Activated naive CD8-positive, alpha-beta T cell treated with anti-CD3 and anti-CD28 coated beads, Interleukin-2, amount 10 ng/mL, durations not matched to agents 7 days and 5 days (primary cell): ENCODE measurements at regions of chr19 and their contacts with region 1.

Region 1: GRCh38 chr19:4342615-4343369 is 570 bp upstream of the MPND start:
- DNase-seq: peak; percentile 89
- ATAC-seq: peak; percentile 89
- H3K4me3 Mint-ChIP-seq: peak overlapping the region; percentile 91
- H3K27ac Mint-ChIP-seq: peak overlapping the region; percentile 95
- H3K4me1 Mint-ChIP-seq: peaks cover 22% of the 10 kb centered on the region
- H3K27me3 Mint-ChIP-seq: no peaks in the 10 kb centered on the region

Region 2: GRCh38 chr19:4246767-4247593 is 95.8 kb before region 1 on chr19 and contains the start of gene YJU2:
- POLR2A ChIA-PET with region 1: interaction called, 20 read pairs
- DNase-seq: peak; percentile 94
- ATAC-seq: peak; percentile 94
- H3K4me3 Mint-ChIP-seq: peak within 1 kb of the TSS; percentile 93
- H3K27ac Mint-ChIP-seq: peak within 1 kb of the TSS; percentile 98
- H3K4me1 Mint-ChIP-seq: peaks cover 6% of the 10 kb centered on the region
- H3K27me3 Mint-ChIP-seq: no peaks in the 10 kb centered on the region
- total RNA-seq, gene YJU2: 27.9 to 29.0 TPM

Region 3: GRCh38 chr19:4267101-4267900 is 75.5 kb before region 1 on chr19:
- POLR2A ChIA-PET with region 1: interaction called, 22 read pairs
- DNase-seq: peak; percentile 66
- ATAC-seq: peak; percentile 43
- H3K4me3 Mint-ChIP-seq: no peak overlapping the region
- H3K27ac Mint-ChIP-seq: peak overlapping the region; percentile 53
- H3K4me1 Mint-ChIP-seq: peaks cover 29% of the 10 kb centered on the region
- H3K27me3 Mint-ChIP-seq: no peaks in the 10 kb centered on the region

Region 4: GRCh38 chr19:4328243-4328990 is 14.4 kb before region 1 on chr19:
- POLR2A ChIA-PET with region 1: interaction called, 30 read pairs
- DNase-seq: peak; percentile 96
- ATAC-seq: peak; percentile 80
- H3K4me3 Mint-ChIP-seq: peak overlapping the region; percentile 86
- H3K27ac Mint-ChIP-seq: peak overlapping the region; percentile 89
- H3K4me1 Mint-ChIP-seq: peaks cover 20% of the 10 kb centered on the region
- H3K27me3 Mint-ChIP-seq: no peaks in the 10 kb centered on the region

Region 5: DNA sequence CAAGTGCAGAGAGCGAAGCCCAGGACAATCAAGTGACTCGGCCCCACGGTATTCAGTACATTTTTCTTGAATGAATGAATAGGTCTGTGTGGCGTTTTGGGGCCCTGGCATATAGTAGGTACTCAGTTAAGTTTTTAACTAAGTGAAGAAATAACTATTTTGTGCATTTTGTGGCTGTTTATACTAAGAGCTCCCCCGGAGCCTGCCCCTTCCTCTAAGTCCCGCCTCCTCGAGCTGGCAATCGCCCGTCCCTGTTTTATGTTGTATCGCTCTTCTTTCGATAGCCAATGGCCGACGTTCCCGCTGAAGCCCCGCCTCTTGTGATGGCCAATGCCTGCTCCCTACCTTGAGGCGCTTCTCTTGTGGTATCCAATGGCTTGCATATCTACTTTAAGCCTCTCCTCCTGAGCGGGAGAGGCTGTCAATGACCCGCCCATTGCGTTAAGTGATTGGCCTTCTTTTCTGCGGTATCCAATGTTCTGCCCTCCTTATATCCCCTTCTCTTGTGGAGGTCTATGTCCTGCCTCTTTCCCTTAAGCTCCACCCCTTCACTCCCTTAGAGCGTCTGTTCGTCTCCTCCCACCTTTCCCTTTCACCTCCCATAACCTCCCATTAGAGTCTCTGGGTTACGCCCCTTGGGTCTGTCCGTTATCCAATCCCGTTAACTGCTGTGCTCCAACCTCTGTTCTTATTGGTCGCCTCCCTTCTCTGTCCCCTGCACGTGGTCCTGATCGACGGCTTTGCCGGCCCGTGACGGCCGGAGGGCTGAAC is 128.8 kb after region 1 on chr19:
- POLR2A ChIA-PET with region 1: interaction called, 14 read pairs
- DNase-seq: peak; percentile 90
- ATAC-seq: peak; percentile 88
- H3K4me3 Mint-ChIP-seq: no peak overlapping the region
- H3K27ac Mint-ChIP-seq: no peak overlapping the region
- H3K4me1 Mint-ChIP-seq: peaks cover 19% of the 10 kb centered on the region
- H3K27me3 Mint-ChIP-seq: no peaks in the 10 kb centered on the region